ENCODE measurements at regions of chr22 and their contacts with region 1.

Region 1: DNA sequence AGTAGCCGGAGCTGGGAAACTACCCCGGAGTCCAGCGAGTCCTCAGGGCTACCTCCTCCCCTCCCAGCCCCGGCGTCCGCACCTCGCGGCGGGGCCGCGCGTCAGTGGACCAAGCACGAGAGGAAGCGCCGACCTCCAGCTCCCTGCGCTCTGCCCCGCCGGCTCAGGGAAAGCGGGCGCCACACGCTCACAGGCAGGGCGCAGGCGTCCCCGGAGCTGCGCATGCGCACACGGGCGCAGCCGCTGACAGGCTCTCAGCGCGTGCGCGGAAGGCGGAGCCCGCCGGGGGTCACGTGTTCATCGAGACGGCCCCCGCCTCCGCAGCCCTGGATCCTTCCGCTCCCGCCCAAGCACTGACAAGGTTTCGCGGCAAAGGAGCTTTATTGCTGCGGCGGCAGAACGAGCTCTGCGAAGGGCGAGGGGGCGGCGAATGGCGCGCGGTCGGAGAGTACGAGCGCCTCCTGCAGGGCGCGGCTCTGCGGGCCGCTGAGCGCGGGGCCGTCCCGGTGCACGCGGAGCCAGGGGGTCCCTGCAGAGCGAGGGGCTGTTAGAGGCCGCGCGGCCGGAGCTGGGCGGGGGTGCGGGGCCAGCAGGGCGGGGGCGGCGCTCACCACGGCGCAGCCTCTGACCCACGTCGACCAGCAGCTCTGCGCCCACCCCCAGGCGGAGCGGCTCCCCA is at the start of gene SCO2:
- DNase-seq: peak; percentile 99
- H3K4me3 Mint-ChIP-seq: peak within 1 kb of the TSS; percentile 83
- H3K27ac Mint-ChIP-seq: peak within 1 kb of the TSS; percentile 95
- H3K4me1 Mint-ChIP-seq: peaks cover 42% of the 10 kb centered on the region
- H3K27me3 Mint-ChIP-seq: no peaks in the 10 kb centered on the region
- total RNA-seq, gene SCO2: 1.9 to 5.6 TPM

Region 2: DNA sequence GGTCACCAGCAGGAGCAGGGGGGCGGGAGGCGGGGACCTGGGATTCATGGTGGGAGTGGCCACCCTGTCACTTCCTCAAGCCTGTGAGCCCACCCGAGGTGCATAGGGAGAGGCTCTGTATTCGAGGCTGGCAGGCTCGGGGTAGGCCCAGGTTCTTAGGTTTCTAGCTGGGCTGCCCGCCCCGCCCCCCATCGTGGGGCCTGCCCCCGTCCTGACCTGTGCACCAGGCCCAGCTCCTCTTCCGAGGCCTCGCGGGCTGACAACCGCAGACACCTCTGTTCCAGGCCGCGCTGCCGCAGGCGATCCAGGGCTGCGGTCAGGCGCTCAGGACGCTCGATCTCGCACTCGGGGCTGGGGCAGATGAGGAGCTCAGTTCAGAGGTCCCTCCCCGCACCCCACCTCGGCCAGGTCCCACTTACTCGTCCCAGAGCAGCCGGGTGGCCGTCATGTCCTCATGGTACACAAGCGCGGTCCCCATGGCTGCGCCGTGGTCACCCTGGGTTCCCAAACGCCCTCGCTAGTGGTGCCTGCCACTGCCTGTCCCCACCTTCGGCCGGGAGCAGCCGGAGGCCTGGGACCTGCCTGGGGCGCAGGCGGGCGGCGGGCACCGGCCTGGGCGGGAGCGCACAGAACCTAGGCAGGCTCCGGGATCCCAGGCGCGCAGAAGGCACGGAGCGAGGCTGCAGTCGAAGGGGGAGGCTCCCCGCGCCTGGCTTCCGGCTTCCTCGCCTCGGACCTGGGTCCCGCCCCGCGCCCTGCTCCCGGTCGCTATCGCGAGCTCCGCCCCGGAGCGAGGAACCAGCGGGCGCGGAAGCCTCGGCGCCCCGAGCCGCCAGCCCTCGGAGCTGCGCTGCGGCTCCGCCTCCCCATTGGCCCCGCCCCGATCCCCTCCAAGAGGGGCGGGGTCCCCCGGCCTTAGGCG is 274.7 kb before region 1 on chr22 and contains the start of gene HDAC10:
- CTCF ChIA-PET with region 1: interaction called, 10 read pairs
- POLR2A ChIA-PET with region 1: interaction called, 4 read pairs
- intact Hi-C with region 1: no loop called
- DNase-seq: peak; percentile 91
- H3K4me3 Mint-ChIP-seq: peak within 1 kb of the TSS; percentile 84
- H3K27ac Mint-ChIP-seq: peak within 1 kb of the TSS; percentile 51
- H3K4me1 Mint-ChIP-seq: peaks cover 24% of the 10 kb centered on the region
- H3K27me3 Mint-ChIP-seq: no peaks in the 10 kb centered on the region
- total RNA-seq, gene HDAC10: 46.1 to 47.6 TPM

Region 3: DNA sequence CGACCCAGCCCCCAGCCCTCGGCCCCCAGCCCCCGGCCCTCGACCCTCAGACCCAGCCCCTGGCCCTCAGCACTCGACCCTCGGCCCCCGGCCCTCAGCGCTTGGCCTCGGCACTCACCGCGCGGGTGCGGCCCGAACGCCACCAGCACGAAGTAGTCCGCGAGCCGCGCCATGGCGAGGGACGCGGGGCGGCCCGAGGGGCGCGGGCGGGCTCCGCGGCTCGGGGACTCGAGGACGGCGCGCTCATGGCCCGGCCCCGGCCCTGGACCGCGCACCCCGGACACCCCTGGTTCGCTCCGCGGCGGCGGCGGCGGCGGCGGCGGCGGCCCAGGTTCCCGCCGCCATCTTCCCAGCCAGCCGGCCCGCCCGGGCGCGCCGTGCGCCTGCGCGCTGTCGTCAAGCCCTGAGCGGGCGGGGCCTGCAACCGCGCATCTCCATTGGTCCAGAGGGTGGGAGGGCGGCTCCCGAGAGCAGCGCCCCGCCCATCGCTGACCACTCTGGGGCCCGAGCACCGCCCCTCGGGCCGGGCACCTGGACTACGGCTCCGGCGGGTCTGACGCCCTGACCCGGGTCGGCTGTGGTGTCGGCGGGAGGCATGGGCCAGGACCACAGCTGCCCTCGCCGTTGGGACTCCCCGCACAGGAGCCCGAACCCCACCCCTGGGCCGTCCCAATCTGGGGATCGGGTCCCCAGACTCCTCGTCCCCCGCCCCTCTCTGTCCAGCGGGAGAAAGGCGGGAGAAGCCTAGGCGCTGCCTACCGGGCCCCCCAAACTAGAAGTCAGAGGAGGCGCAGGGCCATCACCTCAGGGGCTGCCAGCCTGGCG is 50.6 kb before region 1 on chr22 and contains the start of gene SBF1:
- CTCF ChIA-PET with region 1: interaction called, 18 read pairs
- POLR2A ChIA-PET with region 1: interaction called, 4 read pairs
- intact Hi-C with region 1: no loop called
- DNase-seq: peak; percentile 93
- H3K4me3 Mint-ChIP-seq: peak within 1 kb of the TSS; percentile 95
- H3K27ac Mint-ChIP-seq: peak within 1 kb of the TSS; percentile 78
- H3K4me1 Mint-ChIP-seq: peaks cover 47% of the 10 kb centered on the region
- H3K27me3 Mint-ChIP-seq: no peaks in the 10 kb centered on the region
- total RNA-seq, gene SBF1: 110 to 112 TPM

Region 4: DNA sequence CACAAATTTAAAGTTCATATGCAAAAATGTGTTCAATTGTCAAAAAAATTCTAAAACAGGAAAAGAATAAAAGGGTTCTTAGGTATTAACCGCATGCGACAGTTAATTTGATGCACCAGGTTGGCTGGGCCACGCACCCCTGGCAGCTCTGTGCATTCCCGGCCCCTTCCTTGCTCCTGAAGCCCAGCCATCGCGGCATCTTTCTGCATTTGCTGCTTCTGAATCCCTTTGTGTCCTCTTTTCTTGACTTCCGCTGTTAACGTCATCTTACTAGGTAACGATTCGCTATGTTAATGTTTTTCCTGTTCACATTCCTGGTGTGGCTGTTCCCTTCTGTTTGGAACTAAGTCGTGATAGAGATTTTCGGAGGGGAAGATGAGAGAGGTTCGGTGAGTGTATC is 12.2 kb after region 1 on chr22:
- CTCF ChIA-PET with region 1: interaction called, 88 read pairs
- POLR2A ChIA-PET with region 1: interaction called, 139 read pairs
- intact Hi-C with region 1: loop called (anchors 2 kb)
- DNase-seq: no peak
- H3K4me3 Mint-ChIP-seq: no peak overlapping the region
- H3K27ac Mint-ChIP-seq: peak overlapping the region; percentile 100
- H3K4me1 Mint-ChIP-seq: peaks cover 81% of the 10 kb centered on the region
- H3K27me3 Mint-ChIP-seq: no peaks in the 10 kb centered on the region

Region 5: GRCh38 chr22:50582562-50583293 is 57.2 kb after region 1 on chr22 and contains the start of gene CHKB:
- CTCF ChIA-PET with region 1: interaction called, 17 read pairs
- POLR2A ChIA-PET with region 1: interaction called, 13 read pairs
- intact Hi-C with region 1: loop called (anchors 2 kb)
- DNase-seq: peak; percentile 99
- H3K4me3 Mint-ChIP-seq: peak within 1 kb of the TSS; percentile 94
- H3K27ac Mint-ChIP-seq: peak within 1 kb of the TSS; percentile 87
- H3K4me1 Mint-ChIP-seq: peaks cover 21% of the 10 kb centered on the region
- H3K27me3 Mint-ChIP-seq: no peaks in the 10 kb centered on the region
- total RNA-seq, gene CHKB: 76.2 to 76.3 TPM

Region 6: GRCh38 chr22:50595189-50595588 is 69.7 kb after region 1 on chr22:
- CTCF ChIA-PET with region 1: no interaction called
- POLR2A ChIA-PET with region 1: no interaction called
- intact Hi-C with region 1: no loop called
- DNase-seq: no peak
- H3K4me3 Mint-ChIP-seq: no peak overlapping the region
- H3K27ac Mint-ChIP-seq: no peak overlapping the region
- H3K4me1 Mint-ChIP-seq: peaks cover 4% of the 10 kb centered on the region
- H3K27me3 Mint-ChIP-seq: peaks cover 12% of the 10 kb centered on the region